Activated naive CD4-positive, alpha-beta T cell treated with anti-CD3 and anti-CD28 coated beads, Interleukin-2, amount 10 ng/mL, durations not matched to agents 7 days and 5 days (primary cell): ENCODE measurements at regions of chr21 and their contacts with region 1.

Region 1: GRCh38 chr21:16330082-16330907 is 600.5 kb downstream of the USP25 start:
- DNase-seq: no peak
- H3K4me3 Mint-ChIP-seq: no peak overlapping the region
- H3K27ac Mint-ChIP-seq: no peak overlapping the region
- H3K4me1 Mint-ChIP-seq: no peaks in the 10 kb centered on the region
- H3K27me3 Mint-ChIP-seq: no peaks in the 10 kb centered on the region

Region 2: GRCh38 chr21:16082038-16082816 is 248.1 kb before region 1 on chr21:
- CTCF ChIA-PET with region 1: interaction called, 13 read pairs
- DNase-seq: no peak
- H3K4me3 Mint-ChIP-seq: no peak overlapping the region
- H3K27ac Mint-ChIP-seq: no peak overlapping the region
- H3K4me1 Mint-ChIP-seq: no peaks in the 10 kb centered on the region
- H3K27me3 Mint-ChIP-seq: no peaks in the 10 kb centered on the region

Region 3: GRCh38 chr21:16363518-16363917 is 33.2 kb after region 1 on chr21:
- CTCF ChIA-PET with region 1: no interaction called
- DNase-seq: no peak
- H3K4me3 Mint-ChIP-seq: no peak overlapping the region
- H3K27ac Mint-ChIP-seq: no peak overlapping the region
- H3K4me1 Mint-ChIP-seq: no peaks in the 10 kb centered on the region
- H3K27me3 Mint-ChIP-seq: no peaks in the 10 kb centered on the region